CD8-positive, alpha-beta T cell (primary cell): ENCODE measurements at regions of chr7 and their contacts with region 1.

Region 1: GRCh38 chr7:27921081-27921836 is 181.3 kb downstream of the TAX1BP1 start:
- DNase-seq: peak in 2 of 9 experiments; percentile 48 to 63
- ATAC-seq: no peak
- H3K4me3 ChIP-seq: no peak overlapping the region
- H3K4me3 Mint-ChIP-seq: no peak overlapping the region
- H3K27ac ChIP-seq: no peak overlapping the region
- H3K27ac Mint-ChIP-seq: no peak overlapping the region
- H3K4me1 ChIP-seq: no peaks in the 10 kb centered on the region
- H3K4me1 Mint-ChIP-seq: no peaks in the 10 kb centered on the region
- H3K27me3 ChIP-seq: no peaks in the 10 kb centered on the region
- H3K27me3 Mint-ChIP-seq: no peaks in the 10 kb centered on the region
- CTCF ChIP-seq: peak; percentile 25

Region 2: GRCh38 chr7:26686448-26686981 is 1234.7 kb before region 1 on chr7:
- CTCF ChIA-PET with region 1: no interaction called
- POLR2A ChIA-PET with region 1: no interaction called
- intact Hi-C with region 1: loop called in 1 of 2 experiments (anchors 5 kb)
- DNase-seq: peak in 3 of 9 experiments; percentile 5 to 59 (median 49)
- ATAC-seq: peak; percentile 38
- H3K4me3 ChIP-seq: no peak overlapping the region
- H3K4me3 Mint-ChIP-seq: no peak overlapping the region
- H3K27ac ChIP-seq: no peak overlapping the region
- H3K27ac Mint-ChIP-seq: no peak overlapping the region
- H3K4me1 ChIP-seq: no peaks in the 10 kb centered on the region
- H3K4me1 Mint-ChIP-seq: no peaks in the 10 kb centered on the region
- H3K27me3 ChIP-seq: no peaks in the 10 kb centered on the region
- H3K27me3 Mint-ChIP-seq: peaks cover 28% of the 10 kb centered on the region
- CTCF ChIP-seq: peak; percentile 89

Region 3: GRCh38 chr7:27784393-27785053 is 136.7 kb before region 1 on chr7:
- CTCF ChIA-PET with region 1: no interaction called
- POLR2A ChIA-PET with region 1: no interaction called
- intact Hi-C with region 1: loop called in 1 of 2 experiments (anchors 5 kb)
- DNase-seq: peak in 3 of 9 experiments; percentile 23 to 69 (median 61)
- ATAC-seq: peak; percentile 64
- H3K4me3 ChIP-seq: no peak overlapping the region
- H3K4me3 Mint-ChIP-seq: no peak overlapping the region
- H3K27ac ChIP-seq: no peak overlapping the region
- H3K27ac Mint-ChIP-seq: peak overlapping the region; percentile 4
- H3K4me1 ChIP-seq: no peaks in the 10 kb centered on the region
- H3K4me1 Mint-ChIP-seq: peaks cover 12% of the 10 kb centered on the region
- H3K27me3 ChIP-seq: no peaks in the 10 kb centered on the region
- H3K27me3 Mint-ChIP-seq: no peaks in the 10 kb centered on the region
- CTCF ChIP-seq: peak; percentile 80